ENCODE measurements at regions of chr2 and their contacts with region 1.

Region 1: DNA sequence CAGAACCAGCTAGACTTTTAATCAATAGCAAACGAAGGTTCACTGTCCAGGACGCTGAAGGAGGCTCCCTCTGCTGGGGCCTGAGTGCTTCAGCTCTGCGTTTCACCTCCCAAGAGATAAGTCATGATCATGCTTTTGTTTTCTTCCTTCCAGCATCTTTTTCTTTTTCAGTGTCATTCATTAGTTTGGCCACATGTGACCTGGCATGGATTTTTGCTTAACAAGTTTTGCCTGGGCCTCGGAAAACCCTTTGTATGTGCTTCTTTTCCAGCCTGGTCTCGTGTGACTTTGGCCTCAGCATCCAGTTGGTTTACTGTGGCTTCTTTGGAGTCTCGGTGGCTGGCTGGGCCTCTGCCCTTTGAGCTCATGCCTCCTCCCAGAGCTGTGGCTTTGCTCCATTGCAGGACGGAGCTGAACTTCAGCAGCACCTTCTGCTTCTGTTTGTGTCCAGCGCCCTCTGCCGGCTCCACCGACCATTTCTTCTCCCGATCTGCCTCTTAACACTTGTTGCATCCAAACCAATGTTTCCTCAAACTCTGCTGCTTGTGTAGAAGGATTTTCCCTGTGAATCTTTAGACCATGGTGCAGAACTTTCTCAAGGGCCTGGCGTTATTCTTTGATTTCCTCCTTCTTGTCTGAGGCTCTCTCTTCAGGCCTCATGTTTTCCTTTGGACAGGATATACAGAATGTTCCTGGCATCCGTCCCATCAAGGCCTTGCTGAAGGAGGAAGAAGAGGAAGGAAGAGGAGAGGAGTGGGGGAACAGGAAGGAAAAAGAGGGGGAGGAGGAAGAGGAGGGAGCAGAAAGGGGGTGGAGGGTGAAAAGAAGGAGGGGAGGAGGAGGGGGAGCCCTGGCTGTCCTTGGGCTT is 23.6 kb upstream of the HES6 start:
- DNase-seq: peak; percentile 61
- H3K4me3 ChIP-seq: no peak overlapping the region
- H3K27me3 ChIP-seq: no peaks in the 10 kb centered on the region
- CTCF ChIP-seq: peak; percentile 82

Region 2: DNA sequence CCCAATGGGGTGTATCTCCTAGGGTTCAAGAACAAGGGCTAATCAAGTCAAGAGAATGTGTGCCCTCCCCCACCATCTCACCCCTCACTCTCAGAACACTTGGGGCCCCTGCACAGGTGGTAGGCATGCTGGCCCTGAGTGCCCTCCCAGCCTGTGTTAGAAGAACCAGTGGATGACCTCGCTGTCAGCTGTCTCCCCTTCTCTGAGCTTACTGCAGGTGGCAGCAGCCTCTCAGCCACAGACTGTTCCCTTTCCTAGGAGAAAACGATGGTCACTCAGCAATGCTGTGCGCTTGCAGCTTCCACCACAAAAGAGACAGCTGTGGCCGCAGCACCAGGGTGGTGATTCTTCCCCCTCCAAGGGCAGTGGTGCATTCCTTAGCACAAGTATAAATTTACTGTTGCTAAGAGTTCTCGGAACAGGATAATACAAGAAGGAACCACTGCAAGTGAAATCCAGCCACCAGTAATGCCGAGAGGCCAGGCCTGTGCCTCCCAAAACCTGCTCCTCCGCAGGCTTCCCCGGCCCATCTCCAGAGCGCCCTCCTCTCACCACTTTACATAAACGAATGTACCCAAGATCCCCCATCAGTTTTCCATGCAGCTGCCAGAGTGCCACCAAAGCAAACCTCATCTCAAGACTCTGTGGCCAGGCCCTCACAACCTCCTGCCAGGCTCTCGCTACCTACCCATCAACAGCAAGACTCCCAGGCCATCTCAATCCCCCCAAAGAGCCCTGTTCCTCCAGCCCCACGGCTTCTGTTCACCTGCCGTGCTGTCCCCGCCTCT is 404.9 kb before region 1 on chr2:
- CTCF ChIA-PET with region 1: interaction called, 84 read pairs
- POLR2A ChIA-PET with region 1: no interaction called
- DNase-seq: peak; percentile 30
- H3K4me3 ChIP-seq: no peak overlapping the region
- H3K27me3 ChIP-seq: peaks cover 5% of the 10 kb centered on the region
- CTCF ChIP-seq: peak; percentile 89

Region 3: DNA sequence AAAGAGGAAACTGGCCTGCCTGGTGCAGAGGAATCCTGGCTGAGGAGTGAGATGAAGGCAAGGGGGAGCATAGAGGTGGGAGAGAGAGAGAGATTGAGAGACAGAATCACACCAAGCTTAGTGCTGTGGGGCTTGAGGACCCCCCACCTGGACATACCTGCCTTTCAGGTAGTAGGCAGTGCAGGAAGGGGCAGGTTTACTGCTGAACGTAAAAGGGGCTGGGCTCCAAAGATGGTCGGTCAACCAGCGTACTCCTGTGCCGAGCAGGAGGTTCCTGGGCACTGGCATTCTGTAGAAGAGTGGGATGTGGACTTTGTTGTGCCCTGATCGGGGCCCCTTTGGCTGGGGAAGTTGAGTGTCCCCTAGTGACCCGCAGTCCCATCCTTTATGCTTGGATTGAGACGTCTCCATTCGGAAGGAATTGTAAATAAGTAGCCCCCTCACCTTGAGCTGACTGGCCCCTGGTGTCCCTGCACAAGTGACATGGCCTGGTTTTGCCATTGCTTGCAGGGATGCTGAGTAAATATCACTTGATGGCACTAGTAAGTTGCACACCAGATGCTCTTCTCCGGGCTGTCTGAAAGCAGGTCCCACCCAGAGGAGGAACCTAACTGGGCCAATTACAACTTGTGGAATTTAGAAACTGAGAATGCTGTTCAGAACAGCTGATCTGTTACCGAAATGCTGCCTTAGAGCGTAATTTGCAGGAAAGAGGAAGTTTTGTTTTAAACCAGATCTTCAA is 295.1 kb before region 1 on chr2:
- CTCF ChIA-PET with region 1: interaction called, 15 read pairs
- POLR2A ChIA-PET with region 1: no interaction called
- DNase-seq: peak; percentile 58
- H3K4me3 ChIP-seq: peak overlapping the region; percentile 89
- H3K27me3 ChIP-seq: no peaks in the 10 kb centered on the region
- CTCF ChIP-seq: no peak

Region 4: GRCh38 chr2:238277695-238278094 is 14.3 kb after region 1 on chr2:
- CTCF ChIA-PET with region 1: interaction called, 52 read pairs
- POLR2A ChIA-PET with region 1: no interaction called
- DNase-seq: no peak
- H3K4me3 ChIP-seq: no peak overlapping the region
- H3K27me3 ChIP-seq: no peaks in the 10 kb centered on the region
- CTCF ChIP-seq: no peak

Region 5: DNA sequence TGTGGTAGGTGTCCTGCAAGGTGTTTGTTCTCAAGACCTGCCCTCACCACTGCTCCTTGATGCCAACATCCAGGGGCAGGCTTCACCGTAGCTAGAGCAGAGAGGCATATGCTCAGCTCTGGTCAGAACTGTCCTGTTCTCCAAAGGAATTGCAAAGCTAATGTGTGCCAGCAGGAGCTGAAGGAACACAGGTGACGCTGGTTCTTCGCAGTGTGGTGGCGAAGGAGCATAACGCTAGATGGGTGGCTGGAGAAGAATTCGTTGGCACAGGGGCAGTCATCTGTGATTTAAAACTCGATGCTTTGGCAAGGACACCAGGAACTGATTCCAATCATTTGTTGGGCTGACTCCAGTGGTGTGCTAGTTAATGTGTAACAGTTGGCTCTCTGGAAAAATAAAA is 36.4 kb after region 1 on chr2:
- CTCF ChIA-PET with region 1: no interaction called
- POLR2A ChIA-PET with region 1: no interaction called
- DNase-seq: no peak
- H3K4me3 ChIP-seq: no peak overlapping the region
- H3K27me3 ChIP-seq: peaks cover 17% of the 10 kb centered on the region
- CTCF ChIP-seq: no peak

Region 6: GRCh38 chr2:238404406-238405216 is 141.2 kb after region 1 on chr2:
- CTCF ChIA-PET with region 1: no interaction called
- POLR2A ChIA-PET with region 1: no interaction called
- DNase-seq: no peak
- H3K4me3 ChIP-seq: no peak overlapping the region
- H3K27me3 ChIP-seq: no peaks in the 10 kb centered on the region
- CTCF ChIP-seq: no peak

Measured in BJ (cell line).